Left ventricle myocardium superior (tissue), 1 donor: ENCODE measurements at regions of chr1 and their contacts with region 1.

Region 1: DNA sequence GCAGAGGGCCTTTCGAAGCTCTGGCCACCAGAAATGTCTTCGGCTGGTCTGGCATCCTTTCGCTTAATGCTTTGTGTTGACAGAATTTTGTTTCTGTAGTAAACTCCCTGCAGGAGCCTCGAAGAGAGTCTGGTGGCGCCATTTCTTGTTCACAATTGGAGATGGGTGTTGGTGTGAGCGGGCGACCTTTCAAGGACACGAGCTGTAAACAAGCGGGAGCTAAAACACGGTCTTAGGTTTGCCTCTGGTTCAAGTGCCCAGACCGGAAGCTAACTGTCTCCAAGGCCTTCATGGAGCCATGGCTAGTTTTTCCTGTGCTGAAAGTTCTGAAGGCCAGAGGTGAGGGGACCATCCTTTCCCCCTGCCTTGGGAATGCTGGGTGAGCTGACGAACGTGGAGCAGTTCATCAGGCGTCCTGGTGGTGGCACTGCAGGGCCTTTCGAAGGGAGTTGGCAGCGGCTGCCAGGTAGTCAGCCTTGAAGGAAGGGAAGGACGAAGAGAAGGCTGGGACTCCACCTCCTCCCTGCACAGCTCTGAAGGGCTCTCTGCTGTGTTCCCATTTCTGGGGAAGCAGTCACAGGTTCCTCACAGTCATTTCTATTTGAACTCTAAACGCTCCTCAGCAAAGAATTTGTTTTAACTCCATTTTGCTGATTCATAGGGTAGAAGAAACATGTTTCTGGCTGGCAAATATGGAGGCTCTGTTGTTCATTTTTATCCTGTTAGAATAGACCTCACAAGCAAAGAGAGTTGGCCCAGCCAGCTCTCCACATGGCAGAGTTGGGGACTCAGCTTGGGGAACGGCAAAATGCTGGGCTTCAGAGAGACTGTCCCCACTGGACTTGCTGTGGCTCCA is 35.2 kb downstream of the URB2 start:
- DNase-seq: peak; percentile 87
- ATAC-seq: peak; percentile 94

Region 2: DNA sequence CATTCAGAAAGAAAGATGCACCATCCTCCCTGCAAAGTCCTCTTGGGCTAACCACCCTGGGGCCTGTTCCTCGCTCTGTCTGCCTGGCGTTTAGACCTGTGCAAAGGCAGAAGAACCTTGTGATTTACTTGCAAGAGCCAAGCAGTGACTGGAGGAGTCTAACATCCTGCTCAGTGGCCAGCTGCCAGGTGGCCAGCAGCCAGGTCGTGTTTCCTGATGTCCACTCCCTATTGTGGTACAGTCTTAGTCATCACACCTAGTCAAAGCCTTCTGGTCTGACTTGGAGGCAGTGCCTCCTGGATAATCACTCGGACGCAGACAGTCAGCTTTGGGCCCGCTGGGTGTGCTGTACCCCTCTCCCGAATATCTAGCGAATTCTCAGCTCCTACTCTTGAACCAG is 646.8 kb after region 1 on chr1:
- intact Hi-C with region 1: loop called (anchors 10 kb)
- DNase-seq: peak; percentile 79
- ATAC-seq: peak; percentile 52